Posterior vena cava (tissue), 2 donors: ENCODE measurements at regions of chr13 and their contacts with region 1.

Region 1: DNA sequence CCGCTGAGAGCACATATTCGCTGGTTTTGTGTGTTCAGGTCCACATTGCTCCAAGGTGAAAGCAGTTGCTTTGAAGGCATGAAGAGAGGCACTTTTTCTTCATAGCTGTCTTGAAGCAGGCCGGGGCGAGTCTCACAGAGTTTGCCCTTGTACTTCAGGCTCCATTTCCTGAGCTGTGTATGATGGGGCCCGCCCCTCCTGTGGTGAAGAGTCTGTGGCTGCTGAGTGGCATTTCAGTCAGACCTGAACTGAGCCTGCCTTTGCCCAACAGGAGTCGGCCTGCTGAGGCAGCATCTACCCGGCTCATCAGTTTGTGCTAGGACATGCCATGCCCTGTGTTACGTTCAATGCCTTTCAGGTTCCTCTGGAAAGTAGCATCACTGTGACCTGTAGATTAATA is 44.4 kb upstream of the C1QTNF9 start:
- DNase-seq: no peak

Region 2: GRCh38 chr13:22451327-22451741 is 1813.6 kb before region 1 on chr13:
- intact Hi-C with region 1: loop called in 1 of 2 experiments (anchors 5 kb)
- DNase-seq: no peak